ENCODE measurements at regions of chr4 and their contacts with region 1.

Region 1: GRCh38 chr4:52019936-52020657 is at the start of gene LRRC66:
- DNase-seq: peak in 2 of 7 donors; percentile 9 to 26
- H3K4me3 ChIP-seq: no peak within 1 kb of the TSS
- H3K27ac ChIP-seq: no peak within 1 kb of the TSS
- H3K4me1 ChIP-seq: no peaks in the 10 kb centered on the region
- H3K27me3 ChIP-seq: no peaks in the 10 kb centered on the region
- CTCF ChIP-seq: no peak
- POLR2A ChIP-seq: no peak
- total RNA-seq, gene LRRC66: 0.14 to 0.67 (median 0.24) TPM in 7 of 9 donors, not detected in the others

Region 2: DNA sequence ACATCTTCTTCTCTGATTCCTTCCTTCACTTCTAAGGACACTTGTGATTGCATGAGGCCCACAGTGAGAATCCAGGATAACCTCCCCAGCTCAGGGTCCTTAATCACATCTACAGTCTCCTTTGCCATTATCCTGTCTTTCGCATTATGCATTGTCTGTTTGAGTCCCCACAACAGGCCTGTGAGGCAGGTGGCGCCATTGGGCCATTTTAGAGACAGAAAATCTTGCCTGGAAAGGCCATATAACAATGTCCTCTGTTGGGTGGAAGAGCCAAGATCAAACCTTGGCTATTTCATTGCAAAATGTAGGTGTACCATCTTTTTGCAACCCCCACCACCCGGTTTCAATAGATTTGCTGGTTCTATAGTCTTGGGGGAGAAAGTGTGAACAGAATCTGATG is 189.0 kb before region 1 on chr4:
- intact Hi-C with region 1: loop called in 1 of 2 experiments (anchors 2 kb)
- DNase-seq: peak; percentile 71 to 90 (median 74)
- H3K4me3 ChIP-seq: no peak overlapping the region
- H3K27ac ChIP-seq: no peak overlapping the region
- H3K4me1 ChIP-seq: no peaks in the 10 kb centered on the region
- H3K27me3 ChIP-seq: no peaks in the 10 kb centered on the region
- CTCF ChIP-seq: peak; percentile 67 to 83 (median 78)
- POLR2A ChIP-seq: no peak